Posterior cingulate gyrus (tissue), 11 donors: ENCODE measurements at regions of chr16 and their contacts with region 1.

Region 1: GRCh38 chr16:86563489-86564345 is 2.9 kb upstream of the FOXC2 start:
- DNase-seq: peak; percentile 73 to 98 (median 89)

Region 2: GRCh38 chr16:86609115-86609514 is 45.4 kb after region 1 on chr16:
- intact Hi-C with region 1: no loop called
- DNase-seq: no peak

Region 3: GRCh38 chr16:87062569-87063442 is 499.1 kb after region 1 on chr16:
- intact Hi-C with region 1: loop called (anchors 1 kb)
- DNase-seq: peak in 7 of 10 donors; percentile 44 to 84 (median 63)

Region 4: GRCh38 chr16:87278191-87279095 is 714.7 kb after region 1 on chr16:
- intact Hi-C with region 1: loop called (anchors 1 kb)
- DNase-seq: peak; percentile 61 to 97 (median 76)

Region 5: DNA sequence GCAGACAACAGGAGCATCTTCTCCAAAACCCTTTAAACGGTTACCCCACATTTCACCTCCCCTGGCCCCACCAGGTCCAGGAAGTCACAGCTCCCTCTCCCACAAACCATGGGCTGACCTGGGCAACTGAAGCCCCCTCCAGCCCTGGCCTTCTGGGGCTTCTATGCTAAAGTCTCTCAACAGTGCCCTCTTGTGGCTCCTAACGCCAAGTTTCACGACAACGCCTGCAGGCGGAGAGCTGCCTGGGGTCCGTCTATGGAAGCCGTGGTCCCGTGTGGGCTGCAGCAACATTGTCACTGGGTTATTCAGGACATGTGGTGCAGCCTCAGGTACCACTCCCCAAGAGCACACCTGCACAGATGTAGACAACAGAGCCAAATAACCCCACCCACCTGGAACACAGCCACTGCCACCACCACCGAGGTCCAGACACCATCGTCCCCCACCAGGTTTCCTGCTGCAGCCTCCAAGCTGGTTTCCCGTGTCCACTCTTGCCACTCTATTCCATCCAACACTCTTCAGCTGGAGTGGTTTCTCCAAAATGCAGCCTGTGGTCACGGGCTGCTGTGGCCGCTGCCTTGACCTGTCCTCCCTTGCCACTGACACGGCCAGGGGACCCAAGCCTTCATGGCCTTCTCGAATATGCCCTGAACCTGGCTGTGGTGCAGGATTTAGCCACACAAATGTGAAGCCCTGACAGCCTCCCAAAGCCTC is 734.4 kb after region 1 on chr16:
- intact Hi-C with region 1: loop called (anchors 5 kb)
- DNase-seq: peak in 3 of 10 donors; percentile 28 to 36 (median 29)